Activated CD4-positive, alpha-beta T cell treated with anti-CD3 and anti-CD28 coated beads for 36 hours (primary cell): ENCODE measurements at regions of chr19 and their contacts with region 1.

Region 1: GRCh38 chr19:38658462-38659306 is 11.2 kb downstream of the ACTN4 start:
- DNase-seq: no peak
- ATAC-seq: no peak
- H3K4me3 Mint-ChIP-seq: no peak overlapping the region
- H3K27ac Mint-ChIP-seq: no peak overlapping the region
- H3K4me1 Mint-ChIP-seq: peaks cover 69% of the 10 kb centered on the region
- H3K27me3 Mint-ChIP-seq: peaks cover 3% of the 10 kb centered on the region

Region 2: GRCh38 chr19:38425810-38426466 is 232.7 kb before region 1 on chr19 and contains the start of gene RASGRP4:
- CTCF ChIA-PET with region 1: no interaction called
- POLR2A ChIA-PET with region 1: no interaction called
- intact Hi-C with region 1: loop called in 1 of 2 experiments (anchors 1 kb)
- DNase-seq: peak; percentile 78
- ATAC-seq: peak; percentile 27
- H3K4me3 Mint-ChIP-seq: peak within 1 kb of the TSS; percentile 60
- H3K27ac Mint-ChIP-seq: peak within 1 kb of the TSS; percentile 90
- H3K4me1 Mint-ChIP-seq: peaks cover 33% of the 10 kb centered on the region
- H3K27me3 Mint-ChIP-seq: no peaks in the 10 kb centered on the region
- total RNA-seq, gene RASGRP4: 5.6 to 5.9 TPM

Region 3: GRCh38 chr19:38592940-38593339 is 65.7 kb before region 1 on chr19:
- CTCF ChIA-PET with region 1: no interaction called
- POLR2A ChIA-PET with region 1: no interaction called
- intact Hi-C with region 1: no loop called
- DNase-seq: no peak
- ATAC-seq: no peak
- H3K4me3 Mint-ChIP-seq: no peak overlapping the region
- H3K27ac Mint-ChIP-seq: no peak overlapping the region
- H3K4me1 Mint-ChIP-seq: no peaks in the 10 kb centered on the region
- H3K27me3 Mint-ChIP-seq: no peaks in the 10 kb centered on the region

Region 4: GRCh38 chr19:38634757-38635482 is 23.8 kb before region 1 on chr19:
- CTCF ChIA-PET with region 1: interaction called, 4 read pairs
- POLR2A ChIA-PET with region 1: no interaction called
- intact Hi-C with region 1: loop called in 1 of 2 experiments (anchors 1 kb)
- DNase-seq: peak; percentile 84
- ATAC-seq: no peak
- H3K4me3 Mint-ChIP-seq: no peak overlapping the region
- H3K27ac Mint-ChIP-seq: peak overlapping the region; percentile 90
- H3K4me1 Mint-ChIP-seq: peaks cover 28% of the 10 kb centered on the region
- H3K27me3 Mint-ChIP-seq: no peaks in the 10 kb centered on the region

Region 5: GRCh38 chr19:38670921-38671398 is 12.3 kb after region 1 on chr19:
- CTCF ChIA-PET with region 1: interaction called, 12 read pairs
- POLR2A ChIA-PET with region 1: interaction called, 7 read pairs
- intact Hi-C with region 1: no loop called
- DNase-seq: no peak
- ATAC-seq: no peak
- H3K4me3 Mint-ChIP-seq: no peak overlapping the region
- H3K27ac Mint-ChIP-seq: no peak overlapping the region
- H3K4me1 Mint-ChIP-seq: peaks cover 66% of the 10 kb centered on the region
- H3K27me3 Mint-ChIP-seq: peaks cover 2% of the 10 kb centered on the region

Region 6: DNA sequence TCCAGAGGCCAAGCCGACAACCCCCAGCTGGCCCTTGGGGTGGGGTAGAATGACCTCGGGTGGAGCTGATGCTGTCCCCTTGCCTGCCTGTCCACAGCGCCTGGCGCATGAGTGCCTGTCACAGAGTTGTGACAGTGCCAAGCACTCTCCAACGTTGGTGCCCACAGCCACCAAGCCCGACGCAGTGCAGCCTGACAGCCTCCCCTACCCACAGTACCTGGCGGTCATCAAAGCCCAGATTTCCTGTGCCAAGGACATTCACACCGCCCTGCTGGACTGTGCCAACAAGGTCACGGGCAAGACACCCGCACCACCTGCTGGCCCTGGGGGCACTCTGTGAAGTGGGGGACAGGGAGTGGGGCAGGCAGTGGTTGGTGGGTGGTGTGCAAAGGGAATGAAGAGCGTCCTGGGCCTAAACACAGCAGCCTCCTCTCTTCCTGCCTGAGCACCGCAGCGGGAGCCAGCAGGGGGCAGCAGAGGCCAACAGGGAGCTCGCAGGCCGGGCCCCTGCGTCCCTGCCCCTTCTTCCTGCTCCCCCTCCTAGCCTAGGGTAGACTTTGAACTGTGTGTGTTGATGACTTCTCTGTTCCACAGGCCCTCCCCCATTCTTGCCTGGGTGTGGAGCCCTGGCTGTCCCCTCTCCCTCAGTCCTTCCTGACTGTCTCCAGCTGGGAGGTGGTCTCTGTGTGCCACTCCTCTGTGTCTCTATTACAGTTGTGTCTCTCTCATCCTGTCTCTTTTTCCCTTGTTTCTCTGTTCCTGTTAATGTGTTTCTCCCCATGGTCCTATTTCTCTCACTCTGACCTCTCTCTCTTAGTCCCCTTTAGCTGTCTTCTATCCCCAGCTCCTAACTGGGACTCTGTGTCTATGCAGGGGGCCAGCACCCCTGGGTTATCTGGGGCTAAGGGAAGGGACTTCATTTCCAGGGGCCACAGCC is 738.9 kb after region 1 on chr19:
- CTCF ChIA-PET with region 1: no interaction called
- POLR2A ChIA-PET with region 1: no interaction called
- intact Hi-C with region 1: loop called in 1 of 2 experiments (anchors 5 kb)
- DNase-seq: peak; percentile 97
- ATAC-seq: peak; percentile 58
- H3K4me3 Mint-ChIP-seq: peak overlapping the region; percentile 52
- H3K27ac Mint-ChIP-seq: peak overlapping the region; percentile 97
- H3K4me1 Mint-ChIP-seq: peaks cover 59% of the 10 kb centered on the region
- H3K27me3 Mint-ChIP-seq: no peaks in the 10 kb centered on the region